Posterior cingulate gyrus (tissue), 11 donors: ENCODE measurements at regions of chr2 and their contacts with region 1.

Region 1: GRCh38 chr2:63588385-63589147 is at the starts of genes MDH1 and WDPCP:
- DNase-seq: peak; percentile 87 to 99 (median 94)

Region 2: DNA sequence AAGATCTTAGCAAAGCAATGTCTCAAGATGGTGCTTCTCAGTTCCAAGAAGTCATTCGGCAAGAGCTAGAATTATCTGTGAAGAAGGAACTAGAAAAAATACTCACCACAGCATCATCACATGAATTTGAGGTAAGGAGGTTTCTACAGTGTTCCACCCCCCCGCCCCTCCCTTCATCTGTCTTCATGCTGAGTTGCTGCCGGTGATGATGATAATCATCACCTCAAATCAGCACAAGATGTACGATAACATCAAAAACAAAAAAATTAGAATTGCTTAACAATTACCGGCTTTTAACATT is 267.7 kb after region 1 on chr2:
- intact Hi-C with region 1: no loop called
- DNase-seq: no peak

Region 3: DNA sequence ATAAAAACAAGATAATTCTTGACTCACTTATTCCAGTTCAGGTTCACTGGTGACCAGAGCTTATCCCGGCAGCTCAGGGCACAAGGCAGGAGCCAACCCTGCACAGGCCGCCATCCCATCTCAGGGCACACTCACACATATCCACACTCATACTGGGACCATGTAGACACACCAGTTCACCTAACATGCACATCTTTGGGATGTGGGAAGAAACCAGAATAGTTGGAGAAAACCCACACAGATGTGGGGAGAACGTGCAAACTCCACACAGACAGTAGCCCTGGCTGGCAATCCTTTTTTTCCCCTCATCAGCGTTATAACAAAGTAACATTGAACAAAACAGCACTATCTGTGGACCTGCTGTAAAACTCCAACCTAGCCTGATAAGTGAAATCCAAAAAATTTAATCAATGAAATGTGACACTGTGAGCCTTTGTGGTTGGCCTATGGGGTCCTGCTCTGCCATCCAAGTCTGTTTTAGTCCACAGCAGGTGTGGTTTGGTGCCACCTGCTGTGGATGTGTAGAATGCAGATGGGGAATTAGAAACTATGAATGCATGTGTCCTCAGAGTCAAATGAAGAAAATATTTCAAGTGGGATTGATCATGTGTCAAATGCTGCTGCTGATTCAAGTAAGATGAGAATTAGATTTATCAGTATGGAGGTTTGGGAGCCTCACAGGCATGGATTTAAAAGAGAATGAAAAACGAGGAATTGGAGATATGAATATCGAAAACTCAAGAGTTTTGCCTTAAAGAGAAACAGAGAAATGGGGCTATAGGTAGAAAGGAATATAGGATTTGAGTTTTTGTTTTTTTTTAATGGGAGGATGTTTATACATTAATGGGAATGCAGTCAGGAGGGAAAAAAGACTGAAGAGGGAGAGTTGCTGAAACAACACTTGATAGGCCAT is 300.2 kb after region 1 on chr2:
- intact Hi-C with region 1: loop called (anchors 10 kb)
- DNase-seq: peak in 5 of 10 donors; percentile 24 to 80 (median 45)